CD8-positive, alpha-beta memory T cell (primary cell): ENCODE measurements at regions of chr1 and their contacts with region 1.

Region 1: GRCh38 chr1:198657550-198658064 is 18.8 kb downstream of the PTPRC start:
- DNase-seq: peak in 4 of 5 donors; percentile 23 to 74 (median 57)
- H3K4me3 ChIP-seq: peak overlapping the region; percentile 37
- H3K4me3 Mint-ChIP-seq: peak overlapping the region; percentile 63 to 85 (median 78)
- H3K27ac ChIP-seq: peak overlapping the region; percentile 41
- H3K27ac Mint-ChIP-seq: peak overlapping the region; percentile 84 to 98 (median 94)
- H3K4me1 ChIP-seq: peaks cover 88% of the 10 kb centered on the region
- H3K4me1 Mint-ChIP-seq: peaks cover 70 to 99% (median 86%) of the 10 kb centered on the region in 3 donors
- H3K27me3 ChIP-seq: no peaks in the 10 kb centered on the region
- H3K27me3 Mint-ChIP-seq: no peaks in the 10 kb centered on the region

Region 2: GRCh38 chr1:198638894-198639635 is 18.5 kb before region 1 on chr1 and contains the start of gene PTPRC:
- CTCF ChIA-PET with region 1: interaction called, 3 read pairs
- POLR2A ChIA-PET with region 1: interaction called, 12 read pairs
- DNase-seq: peak in 2 of 5 donors; percentile 57 to 69
- H3K4me3 ChIP-seq: peak within 1 kb of the TSS; percentile 70
- H3K4me3 Mint-ChIP-seq: peak within 1 kb of the TSS; percentile 85 to 97 (median 89)
- H3K27ac ChIP-seq: peak within 1 kb of the TSS; percentile 91
- H3K27ac Mint-ChIP-seq: peak within 1 kb of the TSS; percentile 82 to 99 (median 94)
- H3K4me1 ChIP-seq: peaks cover 52% of the 10 kb centered on the region
- H3K4me1 Mint-ChIP-seq: peaks cover 49 to 62% (median 49%) of the 10 kb centered on the region in 3 donors
- H3K27me3 ChIP-seq: no peaks in the 10 kb centered on the region
- H3K27me3 Mint-ChIP-seq: no peaks in the 10 kb centered on the region
- total RNA-seq, gene PTPRC: 311 to 319 TPM

Region 3: DNA sequence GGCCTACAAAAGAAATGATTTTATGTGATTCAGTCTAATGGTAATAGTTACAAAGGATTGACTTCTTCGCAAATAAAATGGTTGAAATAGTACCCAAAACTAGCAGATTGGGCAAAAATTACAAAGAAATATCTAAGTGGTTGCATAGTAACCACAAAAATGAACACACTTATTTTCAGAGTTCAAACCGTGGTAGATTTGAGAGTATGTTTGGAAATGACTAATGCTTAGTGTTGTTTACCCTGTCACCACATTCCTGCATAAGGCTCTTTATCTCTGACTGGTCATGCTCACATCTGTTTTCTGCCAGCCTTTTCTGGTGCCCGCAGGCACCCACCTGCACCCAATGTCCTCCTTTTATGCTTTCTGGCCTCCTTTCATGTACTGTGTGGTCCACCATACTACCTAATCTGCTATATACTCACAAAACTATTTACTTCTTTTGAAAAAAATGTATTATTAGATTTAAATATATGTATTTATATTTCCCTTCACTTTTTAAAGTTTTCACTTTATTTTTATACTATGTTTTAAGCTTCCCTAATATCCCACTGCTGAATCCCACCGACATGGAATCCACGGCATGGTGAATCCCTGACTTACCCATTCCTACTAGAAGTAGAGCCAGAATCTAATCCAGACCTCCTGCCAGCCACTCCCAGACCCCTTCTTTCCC is 11.6 kb after region 1 on chr1:
- CTCF ChIA-PET with region 1: interaction called, 6 read pairs
- POLR2A ChIA-PET with region 1: interaction called, 24 read pairs
- DNase-seq: peak; percentile 20 to 76 (median 48)
- H3K4me3 ChIP-seq: no peak overlapping the region
- H3K4me3 Mint-ChIP-seq: peak overlapping the region; percentile 49 to 84 (median 79)
- H3K27ac ChIP-seq: peak overlapping the region; percentile 22
- H3K27ac Mint-ChIP-seq: peak overlapping the region; percentile 94 to 98 (median 98)
- H3K4me1 ChIP-seq: peaks cover 96% of the 10 kb centered on the region
- H3K4me1 Mint-ChIP-seq: peaks cover 85 to 97% (median 97%) of the 10 kb centered on the region in 3 donors
- H3K27me3 ChIP-seq: no peaks in the 10 kb centered on the region
- H3K27me3 Mint-ChIP-seq: no peaks in the 10 kb centered on the region

Region 4: DNA sequence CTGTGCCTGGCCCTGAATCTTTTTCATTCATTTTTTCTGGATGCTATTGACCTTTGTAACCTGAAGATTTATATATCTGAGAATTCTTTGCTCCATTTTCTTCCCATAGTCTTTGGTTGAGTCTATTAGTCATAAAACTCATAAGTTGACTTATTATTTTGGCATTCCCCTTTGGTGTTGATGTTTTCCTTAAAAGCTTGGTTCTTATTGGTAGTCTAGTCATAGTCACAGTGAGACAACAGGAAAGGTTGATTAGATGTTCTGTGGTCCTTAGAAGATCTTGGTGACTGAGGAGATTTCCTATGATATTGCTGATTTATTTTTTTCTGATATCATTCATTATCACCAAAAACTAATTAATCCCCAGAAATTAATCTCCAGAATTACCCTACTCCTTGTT is 67.5 kb after region 1 on chr1:
- CTCF ChIA-PET with region 1: no interaction called
- POLR2A ChIA-PET with region 1: no interaction called
- DNase-seq: no peak
- H3K4me3 ChIP-seq: no peak overlapping the region
- H3K4me3 Mint-ChIP-seq: peak overlapping the region in 4 of 7 donors; percentile 0 to 60 (median 38)
- H3K27ac ChIP-seq: no peak overlapping the region
- H3K27ac Mint-ChIP-seq: peak overlapping the region; percentile 59 to 93 (median 82)
- H3K4me1 ChIP-seq: peaks cover 31% of the 10 kb centered on the region
- H3K4me1 Mint-ChIP-seq: peaks cover 52 to 87% (median 76%) of the 10 kb centered on the region in 3 donors
- H3K27me3 ChIP-seq: no peaks in the 10 kb centered on the region
- H3K27me3 Mint-ChIP-seq: no peaks in the 10 kb centered on the region